Panc1 (cell line): ENCODE measurements at regions of chr14 and their contacts with region 1.

Region 1: DNA sequence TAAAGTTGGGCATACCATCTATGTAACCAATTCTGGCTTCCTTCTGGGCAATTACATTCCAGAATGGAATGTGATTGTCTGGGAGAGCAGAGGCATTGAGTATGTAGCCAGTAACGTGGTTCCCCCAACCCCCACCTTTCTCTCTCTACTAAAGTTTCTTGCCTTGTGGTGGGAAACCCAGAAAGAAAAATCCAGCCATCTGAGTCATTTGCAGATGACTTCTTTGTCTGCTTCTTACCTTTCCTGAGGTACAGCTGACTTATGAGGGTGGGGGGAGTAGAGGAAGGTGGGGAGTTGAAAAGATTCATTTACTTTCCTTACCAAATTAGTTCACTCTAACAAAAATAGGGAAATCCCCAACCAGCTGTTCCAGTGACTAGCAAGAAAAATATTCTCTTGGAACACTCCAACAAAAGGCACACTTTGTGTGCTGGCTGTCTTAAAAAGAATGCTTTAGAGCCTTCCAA is 112.1 kb upstream of the FRMD6 start:
- DNase-seq: no peak
- ATAC-seq: peak; percentile 37
- H3K4me3 ChIP-seq: no peak overlapping the region
- H3K27ac ChIP-seq: peak overlapping the region; percentile 66
- H3K4me1 ChIP-seq: no peaks in the 10 kb centered on the region; the same call in 1 of the 2 replicates
- H3K27me3 ChIP-seq: no peaks in the 10 kb centered on the region
- CTCF ChIP-seq: no peak

Region 2: GRCh38 chr14:51401278-51401677 is 138.3 kb before region 1 on chr14:
- CTCF ChIA-PET with region 1: no interaction called
- POLR2A ChIA-PET with region 1: no interaction called
- in situ Hi-C with region 1: no loop called
- intact Hi-C with region 1: loop called (anchors 10 kb)
- DNase-seq: no peak
- ATAC-seq: no peak
- H3K4me3 ChIP-seq: no peak overlapping the region
- H3K27ac ChIP-seq: no peak overlapping the region
- H3K4me1 ChIP-seq: 0 out of 2 replicates have a peak, but pooled peaks cover 2% of the 10 kb centered on the region
- H3K27me3 ChIP-seq: no peaks in the 10 kb centered on the region
- CTCF ChIP-seq: no peak